Mammary epithelial cell (primary cell): ENCODE measurements at regions of chr9 and their contacts with region 1.

Region 1: DNA sequence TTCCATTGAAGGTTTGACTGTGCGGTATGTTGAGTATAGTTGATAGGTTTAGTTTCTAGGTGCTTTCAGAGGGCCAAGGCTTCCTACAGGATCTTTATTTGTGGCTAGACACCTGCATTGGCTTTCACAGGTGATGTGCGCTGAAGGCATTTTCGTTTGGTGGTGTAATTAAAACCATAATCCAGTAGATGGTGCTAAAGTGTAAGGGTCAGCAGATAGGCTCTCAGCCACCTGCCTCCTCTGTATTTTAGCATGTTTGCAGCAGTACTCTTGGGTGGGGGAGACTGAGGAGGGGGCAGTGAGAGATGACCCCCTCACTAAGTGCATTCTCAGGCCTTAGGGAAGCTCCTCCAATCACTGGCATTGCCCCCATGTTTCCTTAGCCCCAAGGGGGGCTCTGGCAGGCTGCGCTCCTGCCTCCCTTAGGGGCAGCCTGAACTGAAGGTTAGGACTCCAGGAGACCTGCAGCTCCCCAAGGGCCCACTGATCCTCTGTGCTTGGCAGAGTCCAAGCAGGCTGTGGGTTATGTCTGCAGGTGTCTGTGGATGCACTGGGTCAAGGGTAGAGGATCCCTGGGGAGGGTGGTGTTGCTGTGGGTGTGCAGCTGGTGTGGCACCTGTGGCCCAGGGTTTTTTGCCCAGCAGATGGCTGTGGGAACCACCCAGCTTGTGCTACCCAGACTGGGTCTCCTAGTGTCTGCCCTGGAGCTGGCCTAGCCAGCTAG is 23.4 kb downstream of the CDK20 start:
- DNase-seq: peak; percentile 43
- H3K4me3 ChIP-seq: no peak overlapping the region
- H3K27ac ChIP-seq: no peak overlapping the region
- H3K4me1 ChIP-seq: no peaks in the 10 kb centered on the region
- H3K27me3 ChIP-seq: no peaks in the 10 kb centered on the region
- CTCF ChIP-seq: peak; percentile 61 to 75

Region 2: DNA sequence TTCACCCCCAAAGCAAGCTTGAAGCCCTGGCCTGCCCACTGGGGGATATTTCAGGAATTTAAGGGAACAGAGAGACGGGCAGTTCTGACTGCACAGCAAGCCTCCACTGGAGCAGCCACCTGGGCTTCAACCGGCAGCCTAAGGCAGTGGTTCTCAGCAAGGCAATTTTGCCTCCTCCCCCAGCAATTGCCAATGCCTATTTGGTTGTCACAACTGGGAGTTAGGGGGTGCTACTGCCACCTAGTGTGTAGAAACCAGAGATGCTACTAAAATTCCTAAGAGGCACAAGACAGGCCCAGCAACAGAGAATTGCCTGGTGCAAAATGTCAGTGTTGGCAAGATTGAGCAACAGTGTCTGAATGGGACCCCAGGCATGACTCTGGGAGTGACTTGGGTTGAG is 283.7 kb before region 1 on chr9:
- CTCF ChIA-PET with region 1: no interaction called
- dilution Hi-C with region 1: no loop called
- in situ Hi-C with region 1: no loop called
- intact Hi-C with region 1: no loop called
- DNase-seq: peak; percentile 8
- H3K4me3 ChIP-seq: no peak overlapping the region
- H3K27ac ChIP-seq: no peak overlapping the region
- H3K4me1 ChIP-seq: no peaks in the 10 kb centered on the region
- H3K27me3 ChIP-seq: no peaks in the 10 kb centered on the region
- CTCF ChIP-seq: peak in 1 of 2 donors; percentile 21

Region 3: GRCh38 chr9:87872079-87872624 is 78.8 kb before region 1 on chr9:
- CTCF ChIA-PET with region 1: no interaction called
- dilution Hi-C with region 1: no loop called
- in situ Hi-C with region 1: no loop called
- intact Hi-C with region 1: no loop called
- DNase-seq: no peak
- H3K4me3 ChIP-seq: no peak overlapping the region
- H3K27ac ChIP-seq: no peak overlapping the region
- H3K4me1 ChIP-seq: peaks cover 7% of the 10 kb centered on the region
- H3K27me3 ChIP-seq: no peaks in the 10 kb centered on the region
- CTCF ChIP-seq: no peak

Region 4: GRCh38 chr9:88041447-88041846 is 90.5 kb after region 1 on chr9:
- CTCF ChIA-PET with region 1: interaction called, 4 read pairs
- dilution Hi-C with region 1: no loop called
- in situ Hi-C with region 1: no loop called
- intact Hi-C with region 1: loop called (anchors 1 kb)
- DNase-seq: no peak
- H3K4me3 ChIP-seq: no peak overlapping the region
- H3K27ac ChIP-seq: no peak overlapping the region
- H3K4me1 ChIP-seq: no peaks in the 10 kb centered on the region
- H3K27me3 ChIP-seq: no peaks in the 10 kb centered on the region
- CTCF ChIP-seq: peak in 1 of 2 donors; percentile 43

Region 5: DNA sequence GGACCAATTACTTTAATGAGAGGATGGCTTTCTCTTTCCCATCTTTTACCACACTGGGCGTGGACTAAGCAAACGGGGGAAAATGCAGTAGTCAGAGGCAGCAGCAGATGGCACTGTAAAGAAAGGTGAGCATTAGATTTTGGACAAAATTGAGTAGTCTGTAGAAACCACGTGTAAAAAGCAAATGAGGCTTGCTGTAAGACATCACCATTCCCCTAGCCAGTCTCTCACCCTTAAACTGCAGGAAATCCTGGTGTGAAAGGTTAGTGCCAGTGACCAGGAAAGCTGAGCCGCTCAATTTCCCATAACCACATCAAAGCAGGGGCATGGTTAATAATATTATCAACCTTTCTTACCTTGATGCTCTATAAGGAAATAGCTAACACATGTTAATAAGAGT is 155.6 kb after region 1 on chr9:
- CTCF ChIA-PET with region 1: interaction called, 4 read pairs
- dilution Hi-C with region 1: no loop called
- in situ Hi-C with region 1: no loop called
- intact Hi-C with region 1: loop called (anchors 1 kb)
- DNase-seq: peak; percentile 40
- H3K4me3 ChIP-seq: no peak overlapping the region
- H3K27ac ChIP-seq: no peak overlapping the region
- H3K4me1 ChIP-seq: no peaks in the 10 kb centered on the region
- H3K27me3 ChIP-seq: no peaks in the 10 kb centered on the region
- CTCF ChIP-seq: peak; percentile 64 to 73

Region 6: DNA sequence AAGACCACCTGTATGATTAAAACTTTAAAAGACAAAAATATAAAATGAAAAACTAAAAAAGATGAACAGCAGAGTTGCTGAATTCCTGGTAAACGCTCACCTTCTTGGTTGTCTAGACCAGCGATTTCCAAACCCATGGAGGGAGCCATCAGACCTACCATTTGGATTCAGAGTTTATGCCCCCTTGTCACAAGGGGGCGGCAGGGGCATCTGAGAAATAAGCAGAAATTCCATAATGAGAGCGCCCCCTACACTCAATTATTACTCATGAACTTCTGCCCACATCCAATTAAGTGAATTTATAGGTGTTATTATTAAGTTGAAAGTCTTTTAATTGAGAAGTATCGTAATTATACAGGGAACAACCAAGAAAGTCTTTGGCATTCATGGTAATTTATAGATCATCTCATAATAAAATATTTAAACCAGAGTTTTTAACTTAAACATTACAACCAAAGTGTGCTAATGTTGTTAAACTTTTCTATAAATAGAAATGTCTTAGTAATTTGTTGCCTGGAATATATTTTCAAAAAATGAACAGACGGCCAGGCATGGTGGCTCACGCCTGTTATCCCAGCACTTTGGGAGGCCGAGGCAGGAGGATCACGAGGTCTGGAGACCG is 222.6 kb after region 1 on chr9:
- CTCF ChIA-PET with region 1: no interaction called
- dilution Hi-C with region 1: no loop called
- in situ Hi-C with region 1: no loop called
- intact Hi-C with region 1: loop called (anchors 2 kb)
- DNase-seq: peak; percentile 67
- H3K4me3 ChIP-seq: no peak overlapping the region
- H3K27ac ChIP-seq: no peak overlapping the region
- H3K4me1 ChIP-seq: no peaks in the 10 kb centered on the region
- H3K27me3 ChIP-seq: no peaks in the 10 kb centered on the region
- CTCF ChIP-seq: peak; percentile 80 to 84

Region 7: GRCh38 chr9:88593537-88594185 is 642.7 kb after region 1 on chr9:
- CTCF ChIA-PET with region 1: no interaction called
- dilution Hi-C with region 1: no loop called
- in situ Hi-C with region 1: no loop called
- intact Hi-C with region 1: loop called (anchors 5 kb)
- DNase-seq: peak; percentile 28
- H3K4me3 ChIP-seq: no peak overlapping the region
- H3K27ac ChIP-seq: no peak overlapping the region
- H3K4me1 ChIP-seq: no peaks in the 10 kb centered on the region
- H3K27me3 ChIP-seq: peaks cover 4% of the 10 kb centered on the region
- CTCF ChIP-seq: peak; percentile 58 to 64